Right ventricle myocardium superior (tissue), 1 donor: ENCODE measurements at regions of chr3 and their contacts with region 1.

Region 1: DNA sequence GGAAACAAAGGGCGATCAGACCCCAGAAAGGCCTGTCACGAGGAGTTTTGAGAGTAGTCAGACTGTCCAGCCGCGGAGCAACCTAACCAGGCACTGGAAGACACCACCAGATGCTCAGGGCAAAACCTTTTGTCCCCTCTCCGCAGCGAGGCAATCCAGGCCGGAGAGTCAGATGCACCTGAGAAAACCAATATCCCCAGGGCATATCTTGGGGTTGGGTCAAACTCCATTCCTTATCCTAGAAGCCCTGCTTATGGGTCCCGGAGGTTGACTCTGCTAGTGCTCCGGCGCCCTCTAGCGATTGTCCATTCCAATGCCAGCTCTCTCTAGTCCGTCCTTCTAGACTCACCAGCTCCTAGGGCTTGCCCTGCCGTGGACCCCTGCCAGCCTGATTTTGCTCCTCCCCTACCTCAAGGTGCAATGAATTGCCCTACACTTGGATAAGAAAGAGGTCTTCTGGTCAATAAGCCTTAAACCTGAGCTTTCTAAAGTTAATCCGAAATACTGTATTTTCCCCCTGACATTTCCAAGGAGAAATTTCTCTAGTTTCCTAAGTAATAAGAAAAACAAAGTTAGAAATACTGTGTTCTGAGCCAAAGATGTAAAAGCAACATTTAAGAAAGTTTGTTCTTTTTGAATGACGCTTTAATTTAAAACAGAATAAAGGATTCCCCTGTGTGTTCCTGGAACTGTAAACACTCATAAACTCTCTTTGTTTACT is 5.5 kb downstream of the CPNE4 start:
- DNase-seq: peak; percentile 86
- ATAC-seq: peak; percentile 95

Region 2: GRCh38 chr3:131405411-131405810 is 623.9 kb before region 1 on chr3:
- intact Hi-C with region 1: no loop called
- DNase-seq: no peak
- ATAC-seq: no peak

Region 3: DNA sequence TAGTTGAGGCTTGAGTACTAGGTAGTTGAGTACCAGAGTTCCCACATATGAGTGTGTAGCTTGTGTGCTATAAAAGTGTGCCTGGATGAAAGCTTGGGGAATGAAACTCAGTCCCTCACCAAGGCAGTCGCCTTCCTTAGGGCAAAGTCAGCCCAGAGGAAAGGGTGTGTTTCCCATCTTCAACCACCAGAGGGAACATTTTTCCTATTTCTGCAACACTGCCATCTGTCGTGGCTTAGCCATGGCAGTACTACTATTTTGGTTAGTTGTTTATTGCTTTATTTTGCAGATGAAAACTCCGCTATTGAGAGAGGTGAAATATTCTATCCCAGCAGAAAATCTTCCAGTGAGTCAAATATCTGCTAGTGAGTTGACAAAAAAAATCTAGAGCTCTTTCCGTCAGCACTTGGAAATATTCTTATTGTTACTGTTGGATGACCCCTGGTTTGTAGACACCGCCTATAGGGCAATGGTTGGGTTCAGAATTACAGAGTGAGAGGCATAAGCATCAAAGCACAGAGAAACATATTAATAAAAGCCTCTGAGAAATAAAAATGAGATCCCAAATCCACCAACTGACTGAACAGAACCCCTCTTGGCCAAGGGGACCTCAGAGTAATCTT is 234.5 kb before region 1 on chr3:
- intact Hi-C with region 1: loop called (anchors 2 kb)
- DNase-seq: no peak
- ATAC-seq: peak; percentile 83

Region 4: GRCh38 chr3:132283440-132283839 is 254.1 kb after region 1 on chr3:
- intact Hi-C with region 1: no loop called
- DNase-seq: no peak
- ATAC-seq: peak; percentile 78